Caco-2 (cell line): ENCODE measurements at regions of chr19 and their contacts with region 1.

Region 1: GRCh38 chr19:860481-861101 is 1.1 kb downstream of the CFD start:
- DNase-seq: peak; percentile 86 to 87
- H3K4me3 ChIP-seq: peak overlapping the region; percentile 35
- H3K4me3 Mint-ChIP-seq: peak overlapping the region; percentile 54
- H3K27ac Mint-ChIP-seq: no peak overlapping the region
- H3K4me1 ChIP-seq: 0 out of 2 replicates have a peak, but pooled peaks cover 4% of the 10 kb centered on the region
- H3K4me1 Mint-ChIP-seq: no peaks in the 10 kb centered on the region
- H3K27me3 ChIP-seq: no peaks in the 10 kb centered on the region
- H3K27me3 Mint-ChIP-seq: no peaks in the 10 kb centered on the region
- CTCF ChIP-seq: peak in 1 of 2 experiments; percentile 14

Region 2: DNA sequence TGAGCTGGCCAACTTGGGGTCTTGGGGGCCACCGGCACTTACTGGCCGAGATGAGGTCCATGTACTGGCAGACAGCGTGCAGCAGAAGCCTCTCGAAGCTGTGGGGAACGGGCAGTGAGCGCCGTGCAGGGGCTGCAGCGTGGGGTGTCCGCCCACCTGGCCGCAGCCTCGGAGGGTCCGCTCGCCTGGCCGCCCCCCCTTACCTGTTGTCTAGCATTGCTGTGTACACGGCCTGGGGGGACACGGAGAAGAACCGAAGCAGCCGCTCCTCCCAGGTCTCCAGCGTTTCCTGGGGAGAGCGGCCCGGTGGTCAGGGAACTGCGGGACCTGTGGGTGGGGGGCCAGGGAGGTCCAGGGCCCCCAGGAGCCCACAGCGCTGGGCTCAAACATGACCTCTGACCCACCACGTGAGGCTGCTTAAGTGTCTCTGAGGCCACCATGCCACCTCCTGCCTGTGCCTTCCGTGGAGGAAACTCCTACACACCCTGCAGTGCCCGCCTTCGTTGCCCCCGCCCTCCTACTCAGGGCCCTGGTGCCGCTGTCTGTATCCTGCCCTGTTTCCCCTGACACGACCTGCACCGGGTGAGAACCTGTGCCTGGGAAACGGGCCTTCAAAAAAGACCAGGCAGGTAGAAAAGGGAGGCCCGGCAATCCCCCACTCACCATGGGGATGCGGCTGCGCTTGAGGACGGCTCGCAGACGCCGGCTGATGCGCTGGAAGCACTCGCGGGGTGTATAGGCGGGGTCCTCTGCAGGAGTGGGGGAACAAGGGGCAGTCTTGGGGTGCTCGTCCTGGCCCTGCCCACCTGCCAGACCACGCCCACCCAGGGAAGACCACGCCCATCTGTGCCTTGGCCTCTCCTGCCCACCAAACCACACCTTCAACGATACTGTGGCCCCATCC is 39.1 kb after region 1 on chr19:
- CTCF ChIA-PET with region 1: interaction called, 10 read pairs
- POLR2A ChIA-PET with region 1: no interaction called
- intact Hi-C with region 1: no loop called
- DNase-seq: no peak
- H3K4me3 ChIP-seq: no peak overlapping the region
- H3K4me3 Mint-ChIP-seq: no peak overlapping the region
- H3K27ac Mint-ChIP-seq: no peak overlapping the region
- H3K4me1 ChIP-seq: no peaks in the 10 kb centered on the region
- H3K4me1 Mint-ChIP-seq: no peaks in the 10 kb centered on the region
- H3K27me3 ChIP-seq: no peaks in the 10 kb centered on the region
- H3K27me3 Mint-ChIP-seq: no peaks in the 10 kb centered on the region
- CTCF ChIP-seq: no peak

Region 3: GRCh38 chr19:924943-925525 is 64.4 kb after region 1 on chr19:
- CTCF ChIA-PET with region 1: no interaction called
- POLR2A ChIA-PET with region 1: no interaction called
- intact Hi-C with region 1: no loop called
- DNase-seq: peak; percentile 68 to 73
- H3K4me3 ChIP-seq: peak overlapping the region; percentile 98
- H3K4me3 Mint-ChIP-seq: peak overlapping the region; percentile 85
- H3K27ac Mint-ChIP-seq: peak overlapping the region; percentile 82
- H3K4me1 ChIP-seq: peaks cover 32% of the 10 kb centered on the region
- H3K4me1 Mint-ChIP-seq: no peaks in the 10 kb centered on the region
- H3K27me3 ChIP-seq: no peaks in the 10 kb centered on the region
- H3K27me3 Mint-ChIP-seq: no peaks in the 10 kb centered on the region
- CTCF ChIP-seq: no peak

Region 4: GRCh38 chr19:1001538-1002166 is 141.1 kb after region 1 on chr19:
- CTCF ChIA-PET with region 1: interaction called, 7 read pairs
- POLR2A ChIA-PET with region 1: no interaction called
- intact Hi-C with region 1: loop called (anchors 2 kb)
- DNase-seq: peak in 1 of 2 experiments; percentile 79
- H3K4me3 ChIP-seq: no peak overlapping the region
- H3K4me3 Mint-ChIP-seq: peak overlapping the region; percentile 69
- H3K27ac Mint-ChIP-seq: no peak overlapping the region
- H3K4me1 ChIP-seq: peaks cover 10% of the 10 kb centered on the region
- H3K4me1 Mint-ChIP-seq: no peaks in the 10 kb centered on the region
- H3K27me3 ChIP-seq: peaks cover 2% of the 10 kb centered on the region; the same call in 1 of the 2 replicates
- H3K27me3 Mint-ChIP-seq: peaks cover 15% of the 10 kb centered on the region
- CTCF ChIP-seq: peak; percentile 85 to 93